Motor neuron (in vitro differentiated cells): ENCODE measurements at regions of chr9 and their contacts with region 1.

Region 1: GRCh38 chr9:14627513-14627912 is 65.7 kb downstream of the ZDHHC21 start:
- ATAC-seq: peak in 5 of 8 experiments; percentile 42 to 61 (median 54)
- H3K4me3 ChIP-seq: no peak overlapping the region
- H3K27ac ChIP-seq: no peak overlapping the region
- H3K4me1 ChIP-seq: peaks cover 0 to 6% of the 10 kb centered on the region in 2 donors

Region 2: DNA sequence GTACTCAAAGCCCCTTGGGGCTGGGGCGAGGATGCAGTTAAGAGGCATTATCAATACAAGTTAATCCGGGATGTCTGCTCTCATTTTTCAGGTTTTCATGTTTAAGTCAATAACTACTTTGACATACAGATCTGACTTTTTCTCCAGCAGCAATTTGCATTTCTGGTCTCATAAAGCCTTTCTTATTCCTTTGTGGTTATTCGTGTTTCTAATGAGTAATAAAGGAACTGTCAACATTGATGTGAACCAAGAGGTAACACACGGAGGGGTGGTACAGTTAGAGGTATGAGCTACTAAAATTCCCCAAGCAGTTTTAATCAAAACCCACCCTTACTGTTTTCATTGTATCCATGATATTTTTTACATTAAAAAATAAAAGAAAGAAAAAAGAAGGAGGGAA is 175.6 kb before region 1 on chr9:
- in situ Hi-C with region 1: loop called in 2 of 9 experiments (anchors 25 kb)
- ATAC-seq: no peak
- H3K4me3 ChIP-seq: no peak overlapping the region
- H3K27ac ChIP-seq: no peak overlapping the region
- H3K4me1 ChIP-seq: no peaks in the 10 kb centered on the region

Region 3: GRCh38 chr9:14661421-14662059 is 34.0 kb after region 1 on chr9:
- in situ Hi-C with region 1: no loop called
- ATAC-seq: peak in 3 of 8 experiments; percentile 40 to 60 (median 45)
- H3K4me3 ChIP-seq: no peak overlapping the region
- H3K27ac ChIP-seq: no peak overlapping the region
- H3K4me1 ChIP-seq: no peaks in the 10 kb centered on the region